ENCODE measurements at regions of chr7 and their contacts with region 1.

Region 1: DNA sequence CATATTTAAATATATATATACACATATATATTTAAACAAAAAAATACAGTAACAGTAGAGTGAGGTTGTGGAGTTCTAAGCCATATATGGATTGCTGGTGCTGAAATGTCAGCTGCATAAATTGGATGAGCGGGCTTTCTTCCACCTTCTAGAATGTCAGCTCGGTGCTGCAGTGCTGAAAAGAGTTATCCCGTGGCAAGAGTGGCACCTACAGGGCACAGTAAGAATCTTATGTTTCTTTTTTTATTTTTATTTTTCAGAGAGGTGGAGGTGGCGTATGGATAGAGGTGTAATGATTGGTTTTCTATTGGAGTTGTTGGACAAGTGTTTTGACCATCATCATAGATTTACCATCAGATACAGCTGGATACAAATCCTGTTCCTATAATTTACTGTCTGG is 86.2 kb upstream of the DYNC1I1 start:
- DNase-seq: peak; percentile 66 to 76 (median 70)
- ATAC-seq: peak; percentile 81
- H3K4me3 ChIP-seq: no peak overlapping the region
- H3K27ac ChIP-seq: no peak overlapping the region
- H3K4me1 ChIP-seq: no peaks in the 10 kb centered on the region
- H3K27me3 ChIP-seq: peaks cover 0 to 4% of the 10 kb centered on the region in 2 donors
- CTCF ChIP-seq: peak; percentile 13 to 87 (median 80)
- POLR2A ChIP-seq: no peak

Region 2: GRCh38 chr7:95511716-95512260 is 174.3 kb before region 1 on chr7:
- intact Hi-C with region 1: loop called (anchors 5 kb)
- DNase-seq: peak; percentile 78 to 86 (median 82)
- ATAC-seq: peak; percentile 95
- H3K4me3 ChIP-seq: no peak overlapping the region
- H3K27ac ChIP-seq: no peak overlapping the region
- H3K4me1 ChIP-seq: no peaks in the 10 kb centered on the region
- H3K27me3 ChIP-seq: peaks cover 0 to 4% of the 10 kb centered on the region in 2 donors
- CTCF ChIP-seq: peak; percentile 86 to 94 (median 89)
- POLR2A ChIP-seq: no peak

Region 3: DNA sequence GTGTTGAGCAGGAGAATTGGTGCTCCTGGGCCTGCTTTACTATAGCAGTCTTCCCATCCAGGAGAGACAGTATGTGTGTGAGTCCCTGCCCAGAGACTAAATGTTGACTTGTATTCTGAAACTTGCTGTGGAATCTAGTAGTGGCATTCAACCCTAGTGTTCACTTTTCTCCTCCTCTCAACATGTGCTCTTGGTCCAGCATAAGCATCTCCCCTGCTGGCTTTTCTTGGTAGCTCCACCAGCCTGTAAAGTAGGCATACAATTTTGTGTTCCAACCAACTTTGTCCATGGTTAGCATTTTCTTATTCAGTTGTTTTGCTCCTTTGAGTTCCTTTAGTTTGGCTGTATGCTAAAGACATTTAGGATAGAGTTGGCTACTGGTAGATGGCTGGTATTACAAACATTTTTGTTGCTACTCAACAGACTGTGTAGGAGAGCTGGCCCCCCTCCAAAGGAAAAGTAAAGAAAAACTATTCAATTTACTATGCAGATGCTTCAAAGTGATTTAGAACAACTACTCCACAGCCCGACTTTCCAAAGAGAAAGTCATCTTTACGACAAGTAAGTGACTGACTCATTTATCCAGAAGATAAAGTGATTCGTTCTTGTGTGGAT is 154.4 kb before region 1 on chr7:
- intact Hi-C with region 1: loop called (anchors 5 kb)
- DNase-seq: no peak
- ATAC-seq: no peak
- H3K4me3 ChIP-seq: no peak overlapping the region
- H3K27ac ChIP-seq: no peak overlapping the region
- H3K4me1 ChIP-seq: peaks cover 6% of the 10 kb centered on the region
- H3K27me3 ChIP-seq: no peaks in the 10 kb centered on the region
- CTCF ChIP-seq: no peak
- POLR2A ChIP-seq: no peak

Region 4: DNA sequence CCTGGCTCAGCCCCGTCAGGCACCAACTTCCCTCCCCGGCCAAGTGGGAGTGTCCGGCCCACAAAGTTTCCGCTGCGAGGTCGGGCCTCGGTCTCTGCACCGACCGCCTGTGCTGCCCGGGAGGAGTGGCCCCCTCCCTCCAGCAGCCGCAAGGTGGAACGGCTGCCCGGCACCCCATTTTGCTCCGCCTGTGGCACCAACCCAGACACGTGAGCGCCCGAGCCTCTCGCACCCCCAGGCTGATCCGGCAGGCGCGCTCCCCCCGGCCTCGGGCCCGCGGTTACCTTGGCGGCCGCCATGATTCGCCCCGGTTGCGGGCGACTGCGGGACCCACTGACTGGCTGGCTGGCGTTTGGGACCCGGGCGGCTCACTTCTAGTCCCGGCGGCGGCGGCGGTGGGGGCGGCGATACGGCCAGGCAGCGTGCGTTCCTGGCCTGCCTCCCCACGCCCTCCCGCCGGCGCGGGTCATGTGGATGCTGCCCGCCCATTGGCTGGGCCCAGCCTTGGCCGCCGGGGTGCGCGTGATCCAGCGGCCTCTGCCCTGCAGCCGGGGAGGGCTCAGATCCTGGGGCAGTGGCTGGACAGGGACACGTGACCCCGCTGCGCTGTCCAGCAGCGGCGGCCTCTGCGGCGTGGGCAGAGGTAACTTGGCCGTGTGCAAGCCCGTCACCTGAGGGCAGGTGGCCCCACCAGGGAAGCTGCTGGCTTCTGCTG is 635.7 kb after region 1 on chr7 and contains the start of gene SLC25A13:
- intact Hi-C with region 1: no loop called
- DNase-seq: peak; percentile 91 to 95 (median 93)
- ATAC-seq: peak; percentile 97
- H3K4me3 ChIP-seq: peak within 1 kb of the TSS; percentile 80 to 83
- H3K27ac ChIP-seq: peak within 1 kb of the TSS; percentile 93 to 99 (median 98)
- H3K4me1 ChIP-seq: peaks cover 35% of the 10 kb centered on the region
- H3K27me3 ChIP-seq: no peaks in the 10 kb centered on the region
- CTCF ChIP-seq: peak in 1 of 7 experiments; percentile 3
- POLR2A ChIP-seq: peak; percentile 60 to 79 (median 75)
- total RNA-seq, gene SLC25A13: 9.6 to 20.1 TPM

Measured in body of pancreas (tissue), 4 donors.